Caco-2 (cell line): ENCODE measurements at regions of chr1 and their contacts with region 1.

Region 1: GRCh38 chr1:54973205-54973921 is 7.1 kb upstream of the TMEM61 start:
- DNase-seq: peak in 1 of 2 experiments; percentile 39
- H3K4me3 ChIP-seq: no peak overlapping the region
- H3K4me3 Mint-ChIP-seq: no peak overlapping the region
- H3K27ac Mint-ChIP-seq: no peak overlapping the region
- H3K4me1 ChIP-seq: no peaks in the 10 kb centered on the region
- H3K4me1 Mint-ChIP-seq: peaks cover 5% of the 10 kb centered on the region
- H3K27me3 ChIP-seq: no peaks in the 10 kb centered on the region
- H3K27me3 Mint-ChIP-seq: no peaks in the 10 kb centered on the region
- CTCF ChIP-seq: peak; percentile 6 to 53

Region 2: DNA sequence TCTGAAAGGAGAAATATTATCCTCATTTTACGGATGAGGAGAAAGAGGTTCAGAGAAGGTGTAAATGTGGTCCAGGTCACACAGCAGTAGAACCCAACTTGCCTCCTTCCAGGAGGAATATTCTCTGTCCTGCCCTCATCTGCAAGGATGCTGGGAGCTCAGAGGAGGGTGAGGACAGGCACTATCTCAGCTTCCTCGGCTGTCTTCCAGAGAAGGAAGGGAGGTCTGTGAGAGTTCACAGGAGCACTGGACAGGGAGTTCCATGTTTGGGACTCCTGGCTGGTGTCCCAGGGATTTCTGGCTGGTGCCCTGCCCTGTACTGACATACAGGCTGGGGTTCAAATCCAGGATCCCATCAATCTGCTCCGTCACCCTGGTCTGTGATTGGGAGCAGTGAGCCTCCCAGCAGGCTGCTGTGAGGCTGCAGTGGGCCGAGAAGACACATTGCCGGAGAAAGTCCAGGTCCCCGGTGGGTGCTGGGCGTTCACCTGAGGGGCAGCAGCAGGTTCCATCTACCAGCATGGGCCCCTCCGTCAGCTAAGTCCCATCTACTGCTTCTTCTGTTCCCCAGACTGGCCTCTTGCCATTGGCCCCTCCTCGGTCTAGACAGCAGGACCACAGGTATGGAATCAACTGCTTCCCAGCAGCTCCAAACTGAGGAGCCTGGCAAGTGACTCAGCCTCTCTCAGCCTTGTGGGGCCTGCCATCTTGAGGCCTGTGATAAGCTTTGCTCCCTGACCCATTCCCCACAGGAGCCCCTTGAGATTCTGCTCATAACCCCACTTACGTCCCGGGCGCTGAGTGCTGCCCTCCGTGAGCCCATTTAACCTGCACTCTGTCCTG is 16.8 kb after region 1 on chr1:
- CTCF ChIA-PET with region 1: no interaction called
- POLR2A ChIA-PET with region 1: no interaction called
- intact Hi-C with region 1: loop called (anchors 1 kb)
- DNase-seq: no peak
- H3K4me3 ChIP-seq: no peak overlapping the region
- H3K4me3 Mint-ChIP-seq: no peak overlapping the region
- H3K27ac Mint-ChIP-seq: no peak overlapping the region
- H3K4me1 ChIP-seq: no peaks in the 10 kb centered on the region
- H3K4me1 Mint-ChIP-seq: no peaks in the 10 kb centered on the region
- H3K27me3 ChIP-seq: no peaks in the 10 kb centered on the region
- H3K27me3 Mint-ChIP-seq: no peaks in the 10 kb centered on the region
- CTCF ChIP-seq: no peak

Region 3: GRCh38 chr1:54996359-54996868 is 23.1 kb after region 1 on chr1:
- CTCF ChIA-PET with region 1: interaction called, 3 read pairs
- POLR2A ChIA-PET with region 1: no interaction called
- intact Hi-C with region 1: loop called (anchors 1 kb)
- DNase-seq: peak; percentile 67 to 74
- H3K4me3 ChIP-seq: no peak overlapping the region
- H3K4me3 Mint-ChIP-seq: no peak overlapping the region
- H3K27ac Mint-ChIP-seq: no peak overlapping the region
- H3K4me1 ChIP-seq: no peaks in the 10 kb centered on the region
- H3K4me1 Mint-ChIP-seq: peaks cover 8% of the 10 kb centered on the region
- H3K27me3 ChIP-seq: no peaks in the 10 kb centered on the region
- H3K27me3 Mint-ChIP-seq: peaks cover 4% of the 10 kb centered on the region
- CTCF ChIP-seq: peak; percentile 60 to 66